ENCODE measurements at regions of chrX and their contacts with region 1.

Region 1: DNA sequence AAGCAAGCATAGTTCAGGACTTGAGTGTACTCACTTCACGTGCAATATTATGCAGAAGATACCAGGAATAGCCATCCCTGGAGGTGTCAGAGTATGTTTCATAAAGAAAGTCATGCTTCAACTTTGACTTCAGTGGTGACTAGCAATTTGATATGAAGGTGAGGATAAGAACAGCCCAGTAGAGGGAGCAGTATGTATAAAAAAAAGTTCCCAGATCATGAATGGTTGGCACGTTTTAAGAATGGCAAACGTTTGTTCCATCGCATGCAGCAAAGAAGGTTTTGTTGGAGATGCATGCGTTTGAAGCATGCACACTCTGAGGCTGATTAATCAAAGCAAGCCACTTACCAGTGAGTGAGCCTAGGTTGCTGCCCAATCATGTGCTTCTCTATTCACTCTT is 33.5 kb upstream of the SLITRK4 start:
- DNase-seq: peak; percentile 24
- H3K4me3 ChIP-seq: no peak overlapping the region
- H3K27ac ChIP-seq: no peak overlapping the region
- H3K4me1 ChIP-seq: no peaks in the 10 kb centered on the region
- H3K27me3 ChIP-seq: no peaks in the 10 kb centered on the region
- CTCF ChIP-seq: peak; percentile 18 to 43

Region 2: GRCh38 chrX:145190801-145191389 is 1521.5 kb after region 1 on chrX:
- CTCF ChIA-PET with region 1: no interaction called
- dilution Hi-C with region 1: no loop called
- in situ Hi-C with region 1: loop called in 1 of 2 experiments (anchors 10 kb)
- intact Hi-C with region 1: loop called (anchors 2 kb)
- DNase-seq: peak; percentile 12
- H3K4me3 ChIP-seq: no peak overlapping the region
- H3K27ac ChIP-seq: no peak overlapping the region
- H3K4me1 ChIP-seq: no peaks in the 10 kb centered on the region
- H3K27me3 ChIP-seq: no peaks in the 10 kb centered on the region
- CTCF ChIP-seq: peak; percentile 19 to 55

Measured in mammary epithelial cell (primary cell).